ENCODE measurements at regions of chr6 and their contacts with region 1.

Region 1: GRCh38 chr6:149028767-149029405 is 282.1 kb downstream of the UST start:
- DNase-seq: no peak
- ATAC-seq: peak; percentile 33
- H3K4me3 Mint-ChIP-seq: no peak overlapping the region
- H3K27ac Mint-ChIP-seq: peak overlapping the region; percentile 75
- H3K4me1 Mint-ChIP-seq: peaks cover 43% of the 10 kb centered on the region
- H3K27me3 Mint-ChIP-seq: no peaks in the 10 kb centered on the region
- CTCF ChIP-seq: peak; percentile 65

Region 2: DNA sequence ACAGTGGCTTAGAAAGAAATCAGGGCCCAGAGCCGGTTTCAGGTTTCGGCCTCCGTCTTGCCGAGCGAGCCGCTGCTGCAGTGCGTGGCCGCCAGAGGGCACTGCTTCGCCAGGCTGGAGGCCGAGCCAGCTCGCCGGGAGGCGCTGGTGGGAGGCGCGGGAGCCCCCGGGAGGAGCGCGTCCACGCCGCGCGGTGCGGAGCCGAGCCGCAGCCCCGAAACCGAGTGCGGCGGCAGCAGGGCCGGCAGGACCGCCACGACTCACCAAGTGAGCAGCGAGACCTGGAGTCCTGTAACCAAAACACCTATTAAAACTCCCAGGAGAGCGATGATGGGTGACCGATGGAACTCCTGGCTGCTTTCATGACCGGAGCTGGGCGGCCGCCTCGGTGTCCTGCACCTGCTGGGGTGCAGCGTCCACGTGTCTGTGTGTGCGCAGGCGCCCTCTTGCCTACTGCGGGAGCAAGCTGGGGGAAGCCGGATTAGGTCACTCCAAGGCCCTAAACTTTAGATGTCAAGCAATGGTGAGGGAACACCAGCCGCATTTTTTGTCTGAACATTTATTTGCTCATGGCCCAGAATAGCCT is 468.9 kb before region 1 on chr6:
- CTCF ChIA-PET with region 1: interaction called, 5 read pairs
- POLR2A ChIA-PET with region 1: no interaction called
- intact Hi-C with region 1: loop called (anchors 5 kb)
- DNase-seq: peak; percentile 74
- ATAC-seq: peak; percentile 87
- H3K4me3 Mint-ChIP-seq: peak overlapping the region; percentile 57
- H3K27ac Mint-ChIP-seq: no peak overlapping the region
- H3K4me1 Mint-ChIP-seq: peaks cover 15% of the 10 kb centered on the region
- H3K27me3 Mint-ChIP-seq: peaks cover 9% of the 10 kb centered on the region
- CTCF ChIP-seq: peak; percentile 18

Region 3: DNA sequence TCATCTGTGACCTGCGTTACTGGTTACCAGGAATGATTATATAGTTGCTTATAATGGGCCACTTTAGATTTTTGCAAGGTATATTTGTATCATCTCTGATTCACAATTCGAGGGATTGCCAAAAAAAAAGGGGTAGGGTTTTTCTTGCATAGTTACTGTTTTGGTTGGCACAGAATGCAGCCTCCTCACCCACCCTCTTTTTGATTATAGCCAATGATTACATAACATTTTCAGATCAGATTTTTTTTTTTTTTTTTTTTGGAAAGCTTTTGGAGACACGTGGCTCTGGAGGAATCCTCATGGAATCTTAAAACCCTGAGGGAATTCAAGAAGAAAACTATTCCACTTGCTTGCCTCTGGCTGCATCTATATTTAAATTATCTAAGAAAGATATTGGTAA is 228.4 kb before region 1 on chr6:
- CTCF ChIA-PET with region 1: no interaction called
- POLR2A ChIA-PET with region 1: interaction called, 13 read pairs
- intact Hi-C with region 1: no loop called
- DNase-seq: no peak
- ATAC-seq: no peak
- H3K4me3 Mint-ChIP-seq: no peak overlapping the region
- H3K27ac Mint-ChIP-seq: no peak overlapping the region
- H3K4me1 Mint-ChIP-seq: peaks cover 61% of the 10 kb centered on the region
- H3K27me3 Mint-ChIP-seq: no peaks in the 10 kb centered on the region
- CTCF ChIP-seq: no peak

Region 4: GRCh38 chr6:148969603-148970061 is 59.3 kb before region 1 on chr6:
- CTCF ChIA-PET with region 1: no interaction called
- POLR2A ChIA-PET with region 1: no interaction called
- intact Hi-C with region 1: no loop called
- DNase-seq: no peak
- ATAC-seq: no peak
- H3K4me3 Mint-ChIP-seq: no peak overlapping the region
- H3K27ac Mint-ChIP-seq: no peak overlapping the region
- H3K4me1 Mint-ChIP-seq: peaks cover 21% of the 10 kb centered on the region
- H3K27me3 Mint-ChIP-seq: no peaks in the 10 kb centered on the region
- CTCF ChIP-seq: no peak

Region 5: DNA sequence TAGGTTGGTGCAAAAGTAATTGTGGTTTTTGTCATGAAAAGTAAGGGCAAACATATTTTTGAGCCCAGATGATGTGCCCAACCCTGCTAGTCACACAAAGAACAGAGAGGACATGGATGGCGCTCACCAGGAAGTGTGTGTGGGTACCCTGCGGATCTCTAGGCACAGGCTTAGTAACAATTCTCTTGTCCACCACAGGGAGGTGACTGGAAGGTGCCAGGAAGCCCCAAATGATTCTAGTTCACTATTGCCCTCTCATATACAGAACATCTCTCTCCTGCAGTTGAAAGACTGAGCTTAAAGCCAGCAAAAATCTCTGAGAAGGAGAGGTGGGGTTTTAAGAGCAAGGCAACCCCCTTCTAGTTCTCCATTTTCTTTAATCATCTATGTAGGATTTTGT is 16.5 kb after region 1 on chr6:
- CTCF ChIA-PET with region 1: interaction called, 5 read pairs
- POLR2A ChIA-PET with region 1: interaction called, 4 read pairs
- intact Hi-C with region 1: loop called (anchors 2 kb)
- DNase-seq: no peak
- ATAC-seq: peak; percentile 60
- H3K4me3 Mint-ChIP-seq: no peak overlapping the region
- H3K27ac Mint-ChIP-seq: peak overlapping the region; percentile 68
- H3K4me1 Mint-ChIP-seq: peaks cover 45% of the 10 kb centered on the region
- H3K27me3 Mint-ChIP-seq: no peaks in the 10 kb centered on the region
- CTCF ChIP-seq: no peak

Region 6: DNA sequence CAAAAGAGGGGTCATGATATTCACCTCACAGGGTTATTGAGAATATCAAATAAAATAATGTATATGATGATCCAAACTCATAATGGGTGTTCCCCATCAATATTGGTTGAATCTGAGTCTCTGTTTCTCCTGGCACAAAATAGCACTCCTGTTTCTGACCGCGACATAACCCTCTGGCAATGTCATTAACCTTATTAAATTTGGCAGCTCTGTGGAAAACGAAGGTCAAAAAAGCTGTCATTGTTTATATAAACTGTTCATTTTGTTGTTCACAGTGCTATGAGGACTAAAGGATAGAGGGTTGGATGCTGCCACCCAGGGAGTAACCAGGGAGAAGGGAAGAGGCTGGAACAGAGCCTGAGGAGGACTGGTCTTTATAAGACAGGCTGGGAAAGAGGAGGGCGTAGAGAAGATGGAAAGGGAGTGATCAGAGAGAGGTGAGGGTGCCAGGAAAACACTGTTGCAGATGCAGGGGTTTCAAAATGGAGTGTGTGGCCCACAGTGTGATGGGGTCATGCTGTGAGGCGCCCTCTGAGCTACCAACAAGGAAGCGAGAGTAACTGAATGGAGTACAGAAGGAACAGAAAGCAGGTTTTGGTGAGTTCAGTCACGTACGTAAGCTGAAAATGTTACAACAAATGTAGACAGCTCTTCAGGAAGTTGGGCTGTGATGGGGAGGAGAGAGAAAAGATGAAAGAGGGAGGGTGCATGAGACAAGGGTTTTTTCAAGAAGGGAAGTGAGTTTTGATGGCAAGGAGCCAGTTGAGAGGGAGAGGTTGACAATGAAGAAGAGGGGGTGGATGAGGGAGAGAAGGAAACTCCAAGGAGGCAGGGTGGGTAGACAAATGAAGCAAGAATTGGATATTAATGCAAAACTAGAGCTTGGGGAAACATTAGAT is 37.0 kb after region 1 on chr6:
- CTCF ChIA-PET with region 1: interaction called, 4 read pairs
- POLR2A ChIA-PET with region 1: interaction called, 22 read pairs
- intact Hi-C with region 1: loop called (anchors 1 kb)
- DNase-seq: no peak
- ATAC-seq: peak; percentile 97
- H3K4me3 Mint-ChIP-seq: peak overlapping the region; percentile 8
- H3K27ac Mint-ChIP-seq: peak overlapping the region; percentile 84
- H3K4me1 Mint-ChIP-seq: peaks cover 43% of the 10 kb centered on the region
- H3K27me3 Mint-ChIP-seq: no peaks in the 10 kb centered on the region
- CTCF ChIP-seq: no peak

Region 7: GRCh38 chr6:149190224-149190831 is 161.4 kb after region 1 on chr6:
- CTCF ChIA-PET with region 1: interaction called, 13 read pairs
- POLR2A ChIA-PET with region 1: interaction called, 5 read pairs
- intact Hi-C with region 1: loop called (anchors 1 kb)
- DNase-seq: peak; percentile 56
- ATAC-seq: peak; percentile 82
- H3K4me3 Mint-ChIP-seq: no peak overlapping the region
- H3K27ac Mint-ChIP-seq: no peak overlapping the region
- H3K4me1 Mint-ChIP-seq: peaks cover 9% of the 10 kb centered on the region
- H3K27me3 Mint-ChIP-seq: no peaks in the 10 kb centered on the region
- CTCF ChIP-seq: no peak

Region 8: DNA sequence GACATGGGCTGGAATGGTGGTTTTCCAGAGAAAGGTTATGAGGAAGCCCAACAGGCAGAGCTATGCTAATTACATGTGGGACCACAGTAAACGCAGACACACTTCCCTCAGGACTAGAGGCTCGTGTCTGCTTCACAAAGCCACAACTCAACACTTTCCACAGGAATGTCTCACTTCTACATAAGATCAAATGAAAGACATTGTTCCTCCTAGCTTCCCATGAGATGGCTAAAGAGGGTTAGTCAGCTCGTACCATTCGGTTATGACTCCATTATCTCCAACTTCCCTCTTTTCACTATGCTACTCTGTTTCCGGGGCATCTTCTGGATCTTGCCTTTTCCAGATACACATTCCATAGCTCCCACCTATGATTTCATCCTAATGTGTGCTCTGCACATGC is 485.0 kb after region 1 on chr6:
- CTCF ChIA-PET with region 1: interaction called, 8 read pairs
- POLR2A ChIA-PET with region 1: interaction called, 3 read pairs
- intact Hi-C with region 1: loop called (anchors 1 kb)
- DNase-seq: no peak
- ATAC-seq: no peak
- H3K4me3 Mint-ChIP-seq: no peak overlapping the region
- H3K27ac Mint-ChIP-seq: peak overlapping the region; percentile 50
- H3K4me1 Mint-ChIP-seq: peaks cover 23% of the 10 kb centered on the region
- H3K27me3 Mint-ChIP-seq: no peaks in the 10 kb centered on the region
- CTCF ChIP-seq: no peak